CD4-positive, alpha-beta T cell (primary cell): ENCODE measurements at regions of chr12 and their contacts with region 1.

Region 1: DNA sequence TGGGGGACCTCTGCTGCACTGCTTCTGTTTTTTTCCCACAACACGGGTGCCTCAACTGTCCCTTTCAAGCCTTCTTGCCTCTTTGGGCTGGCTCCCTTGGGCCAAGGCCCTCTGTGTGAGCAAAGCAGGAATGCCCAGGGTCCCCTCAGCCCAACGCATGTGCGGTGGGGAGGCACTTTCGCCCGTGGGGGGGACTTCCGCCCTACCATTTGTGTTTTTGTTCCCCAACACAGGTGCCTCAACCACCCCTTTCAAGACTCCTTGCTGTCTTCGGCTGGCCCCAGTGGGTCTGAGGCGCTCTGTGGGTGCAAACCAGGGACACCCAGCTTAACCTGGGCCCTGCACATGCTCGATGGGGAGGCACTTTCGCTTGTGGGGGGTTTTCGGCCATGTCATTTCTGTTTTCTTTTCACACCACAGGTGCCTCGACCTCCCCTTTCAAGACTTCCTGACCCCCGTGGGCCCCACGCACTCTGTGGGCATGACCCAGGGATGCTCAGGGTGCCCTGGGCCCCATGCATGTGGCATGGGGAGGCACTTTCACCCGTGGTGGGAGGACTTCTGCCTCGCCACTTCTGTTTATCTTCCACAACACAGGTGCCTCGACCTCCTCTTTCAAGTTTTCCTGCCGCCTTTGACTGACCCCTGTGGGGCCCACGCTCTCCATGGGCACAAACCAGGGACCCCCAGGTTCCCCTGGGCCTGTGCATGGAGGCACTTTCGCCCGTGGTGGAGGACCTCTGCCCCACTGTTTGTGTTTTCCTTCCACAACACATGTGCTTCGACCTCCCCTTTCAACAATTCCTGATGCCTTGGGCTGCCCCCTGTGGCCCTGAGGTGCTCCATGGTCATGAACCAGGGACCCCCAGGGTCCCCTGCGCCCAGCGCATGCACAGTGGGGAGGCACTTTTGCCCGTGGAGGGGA is 365.7 kb downstream of the ALG10 start:
- DNase-seq: no peak
- ATAC-seq: no peak
- H3K4me3 ChIP-seq: no peak overlapping the region
- H3K4me3 Mint-ChIP-seq: no peak overlapping the region
- H3K27ac ChIP-seq: no peak overlapping the region
- H3K27ac Mint-ChIP-seq: no peak overlapping the region
- H3K4me1 ChIP-seq: no peaks in the 10 kb centered on the region
- H3K4me1 Mint-ChIP-seq: no peaks in the 10 kb centered on the region
- H3K27me3 ChIP-seq: peaks cover 0 to 2% of the 10 kb centered on the region in 2 experiments
- H3K27me3 Mint-ChIP-seq: no peaks in the 10 kb centered on the region
- CTCF ChIP-seq: no peak

Region 2: GRCh38 chr12:33486058-33486457 is 901.9 kb before region 1 on chr12:
- CTCF ChIA-PET with region 1: no interaction called
- POLR2A ChIA-PET with region 1: no interaction called
- intact Hi-C with region 1: no loop called
- DNase-seq: no peak
- ATAC-seq: no peak
- H3K4me3 ChIP-seq: no peak overlapping the region
- H3K4me3 Mint-ChIP-seq: no peak overlapping the region
- H3K27ac ChIP-seq: no peak overlapping the region
- H3K27ac Mint-ChIP-seq: no peak overlapping the region
- H3K4me1 ChIP-seq: no peaks in the 10 kb centered on the region
- H3K4me1 Mint-ChIP-seq: no peaks in the 10 kb centered on the region
- H3K27me3 ChIP-seq: no peaks in the 10 kb centered on the region
- H3K27me3 Mint-ChIP-seq: no peaks in the 10 kb centered on the region
- CTCF ChIP-seq: no peak

Region 3: GRCh38 chr12:34350092-34351041 is 37.6 kb before region 1 on chr12:
- CTCF ChIA-PET with region 1: no interaction called
- POLR2A ChIA-PET with region 1: no interaction called
- intact Hi-C with region 1: loop called in 1 of 2 experiments (anchors 1 kb)
- DNase-seq: no peak
- ATAC-seq: no peak
- H3K4me3 ChIP-seq: no peak overlapping the region
- H3K4me3 Mint-ChIP-seq: no peak overlapping the region
- H3K27ac ChIP-seq: no peak overlapping the region
- H3K27ac Mint-ChIP-seq: no peak overlapping the region
- H3K4me1 ChIP-seq: no peaks in the 10 kb centered on the region
- H3K4me1 Mint-ChIP-seq: no peaks in the 10 kb centered on the region
- H3K27me3 ChIP-seq: no peaks in the 10 kb centered on the region
- H3K27me3 Mint-ChIP-seq: no peaks in the 10 kb centered on the region
- CTCF ChIP-seq: no peak